SK-N-SH (cell line): ENCODE measurements at regions of chr12 and their contacts with region 1.

Region 1: DNA sequence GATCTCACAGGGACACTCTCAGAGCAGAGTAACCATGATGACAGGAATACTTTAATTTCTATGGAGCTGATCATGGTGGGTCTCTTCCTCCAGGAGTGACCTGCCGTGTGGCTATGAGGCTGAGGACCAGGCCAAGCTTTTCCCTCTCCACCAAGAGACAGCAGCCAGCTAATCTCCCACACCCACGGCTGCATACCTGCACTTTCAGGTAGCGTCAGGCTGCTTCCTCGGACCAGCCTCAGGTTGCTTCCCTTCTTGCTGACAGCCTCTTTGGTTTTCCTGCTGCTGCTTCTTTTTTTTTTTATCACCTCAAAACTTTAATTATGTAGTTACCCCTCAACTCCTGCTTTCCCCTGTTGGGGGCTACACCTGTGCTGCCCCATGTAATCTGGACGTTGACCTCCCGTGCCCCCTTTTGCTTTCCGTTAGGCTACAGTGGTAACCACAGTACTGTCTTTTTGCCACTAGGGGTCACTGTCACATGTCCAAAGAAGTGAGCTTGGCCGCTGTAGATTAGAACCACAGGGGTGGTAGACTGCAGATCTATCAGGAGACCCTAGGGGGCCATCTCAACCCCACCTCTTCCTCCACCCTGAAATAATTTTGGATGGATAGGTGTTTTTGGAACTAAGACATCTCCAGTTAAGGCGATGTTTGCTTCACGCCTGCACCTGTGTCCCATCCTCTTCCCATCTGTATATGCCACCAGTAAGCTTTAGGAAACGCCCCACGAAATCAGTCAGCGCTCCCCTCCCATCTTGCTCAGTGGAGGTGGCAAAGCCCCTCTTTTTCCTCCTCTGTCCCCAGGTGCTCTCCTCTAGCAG is 7.8 kb upstream of the PIP4K2C start:
- DNase-seq: peak; percentile 92
- H3K4me3 ChIP-seq: no peak overlapping the region; a peak in 1 of 4 replicates
- H3K27ac ChIP-seq: no peak overlapping the region
- H3K4me1 ChIP-seq: no peaks in the 10 kb centered on the region
- H3K27me3 ChIP-seq: no peaks in the 10 kb centered on the region
- CTCF ChIP-seq: peak; percentile 98
- EP300 ChIP-seq: no peak
- RAD21 ChIP-seq: peak; percentile 97

Region 2: GRCh38 chr12:56873382-56873781 is 709.8 kb before region 1 on chr12:
- CTCF ChIA-PET with region 1: no interaction called
- POLR2A ChIA-PET with region 1: no interaction called
- DNase-seq: no peak
- H3K4me3 ChIP-seq: no peak overlapping the region
- H3K27ac ChIP-seq: no peak overlapping the region
- H3K4me1 ChIP-seq: no peaks in the 10 kb centered on the region
- H3K27me3 ChIP-seq: no peaks in the 10 kb centered on the region
- CTCF ChIP-seq: no peak
- EP300 ChIP-seq: no peak
- RAD21 ChIP-seq: no peak

Region 3: GRCh38 chr12:57452181-57452936 is 130.9 kb before region 1 on chr12:
- CTCF ChIA-PET with region 1: no interaction called
- POLR2A ChIA-PET with region 1: no interaction called
- DNase-seq: no peak
- H3K4me3 ChIP-seq: no peak overlapping the region
- H3K27ac ChIP-seq: peak overlapping the region in 1 of 2 experiments; percentile 34; a peak in 1 of 4 replicates
- H3K4me1 ChIP-seq: peaks cover 6 to 16% of the 10 kb centered on the region in 2 experiments; a peak in 2 of 4 replicates
- H3K27me3 ChIP-seq: no peaks in the 10 kb centered on the region
- CTCF ChIP-seq: no peak
- EP300 ChIP-seq: no peak
- RAD21 ChIP-seq: no peak

Region 4: GRCh38 chr12:57546438-57547383 is 36.5 kb before region 1 on chr12 and contains the start of gene DCTN2:
- CTCF ChIA-PET with region 1: interaction called, 24 read pairs
- POLR2A ChIA-PET with region 1: no interaction called
- DNase-seq: peak; percentile 97
- H3K4me3 ChIP-seq: peak within 1 kb of the TSS; percentile 84 to 86
- H3K27ac ChIP-seq: peak within 1 kb of the TSS; percentile 55 to 67; a peak in 3 of 4 replicates
- H3K4me1 ChIP-seq: peaks cover 16 to 23% of the 10 kb centered on the region in 2 experiments
- H3K27me3 ChIP-seq: no peaks in the 10 kb centered on the region
- CTCF ChIP-seq: peak; percentile 25
- EP300 ChIP-seq: no peak
- RAD21 ChIP-seq: peak; percentile 24
- polyA plus RNA-seq, gene DCTN2: 122 and 139 TPM in 2 replicates

Region 5: GRCh38 chr12:57563358-57563757 is 19.9 kb before region 1 on chr12:
- CTCF ChIA-PET with region 1: interaction called, 110 read pairs
- POLR2A ChIA-PET with region 1: no interaction called
- DNase-seq: no peak
- H3K4me3 ChIP-seq: no peak overlapping the region
- H3K27ac ChIP-seq: no peak overlapping the region
- H3K4me1 ChIP-seq: 0 out of 4 replicates have a peak, but pooled peaks cover 0 to 4% of the 10 kb centered on the region in 2 experiments
- H3K27me3 ChIP-seq: no peaks in the 10 kb centered on the region
- CTCF ChIP-seq: no peak
- EP300 ChIP-seq: no peak
- RAD21 ChIP-seq: no peak

Region 6: GRCh38 chr12:57611108-57611809 is 28.0 kb after region 1 on chr12 and contains the start of gene ARHGEF25:
- CTCF ChIA-PET with region 1: interaction called, 90 read pairs
- POLR2A ChIA-PET with region 1: no interaction called
- DNase-seq: peak; percentile 97
- H3K4me3 ChIP-seq: peak within 1 kb of the TSS; percentile 51 to 75
- H3K27ac ChIP-seq: peak within 1 kb of the TSS; percentile 36 to 86; a peak in 3 of 4 replicates
- H3K4me1 ChIP-seq: peaks cover 5 to 29% of the 10 kb centered on the region in 2 experiments; a peak in 2 of 4 replicates
- H3K27me3 ChIP-seq: no peaks in the 10 kb centered on the region
- CTCF ChIP-seq: no peak
- EP300 ChIP-seq: no peak
- RAD21 ChIP-seq: no peak
- polyA plus RNA-seq, gene ARHGEF25: 48.1 and 51.6 TPM in 2 replicates

Region 7: GRCh38 chr12:57693659-57694458 is 110.6 kb after region 1 on chr12 and contains the start of gene OS9:
- CTCF ChIA-PET with region 1: interaction called, 27 read pairs
- POLR2A ChIA-PET with region 1: no interaction called
- DNase-seq: peak; percentile 90
- H3K4me3 ChIP-seq: peak within 1 kb of the TSS; percentile 90
- H3K27ac ChIP-seq: peak within 1 kb of the TSS in 1 of 2 experiments; percentile 59; a peak in 2 of 4 replicates
- H3K4me1 ChIP-seq: peaks cover 0 to 7% of the 10 kb centered on the region in 2 experiments; a peak in 2 of 4 replicates
- H3K27me3 ChIP-seq: no peaks in the 10 kb centered on the region
- CTCF ChIP-seq: peak; percentile 71
- EP300 ChIP-seq: no peak
- RAD21 ChIP-seq: peak; percentile 56
- polyA plus RNA-seq, gene OS9: 280 and 362 TPM in 2 replicates

Region 8: DNA sequence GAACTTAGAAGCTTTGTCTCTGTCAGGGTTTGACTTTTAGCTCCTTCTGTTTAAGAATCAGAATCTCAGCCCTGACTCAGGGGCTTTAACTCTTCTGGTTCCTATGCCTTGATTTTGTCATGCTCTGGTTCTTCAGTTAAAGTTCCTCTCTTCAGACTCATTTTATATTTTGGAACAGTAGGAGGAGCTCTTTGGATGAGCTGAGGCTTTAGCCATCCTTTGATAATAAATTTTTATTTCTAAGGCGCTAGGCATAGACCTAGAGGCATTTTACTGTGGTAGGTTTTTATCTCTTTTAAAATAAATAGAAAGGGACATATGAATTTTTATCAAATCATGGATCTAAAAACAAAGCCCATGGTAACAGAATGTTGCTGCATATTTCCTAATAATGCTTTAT is 409.8 kb after region 1 on chr12:
- CTCF ChIA-PET with region 1: no interaction called
- POLR2A ChIA-PET with region 1: no interaction called
- DNase-seq: no peak
- H3K4me3 ChIP-seq: no peak overlapping the region
- H3K27ac ChIP-seq: no peak overlapping the region
- H3K4me1 ChIP-seq: no peaks in the 10 kb centered on the region
- H3K27me3 ChIP-seq: no peaks in the 10 kb centered on the region
- CTCF ChIP-seq: no peak
- EP300 ChIP-seq: no peak
- RAD21 ChIP-seq: no peak